ENCODE measurements at regions of chr10 and their contacts with region 1.

Region 1: GRCh38 chr10:25297466-25297865 is 122.7 kb downstream of the GPR158 start:
- DNase-seq: no peak
- ATAC-seq: no peak

Region 2: DNA sequence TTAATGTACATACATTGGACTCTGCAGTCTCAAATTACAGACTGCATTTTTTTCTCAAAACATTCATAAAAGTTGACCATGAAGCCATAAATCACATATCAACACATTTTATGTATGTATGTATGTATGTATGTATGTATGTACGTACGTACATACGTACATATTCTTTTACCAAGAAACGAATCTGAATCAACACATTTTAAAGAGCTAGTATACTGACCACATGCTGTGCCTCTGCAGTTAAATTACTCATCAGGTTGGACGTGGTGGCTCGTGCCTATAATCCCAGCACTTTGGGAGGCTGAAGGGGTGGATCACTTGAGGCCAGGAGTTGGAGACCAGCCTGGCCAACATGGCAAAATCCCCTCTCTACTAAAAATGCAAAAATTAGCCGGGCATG is 16.9 kb before region 1 on chr10:
- intact Hi-C with region 1: loop called (anchors 1 kb)
- DNase-seq: no peak
- ATAC-seq: no peak

Measured in sciatic nerve (tissue), 2 donors.